ENCODE measurements at regions of chr1 and their contacts with region 1.

Region 1: GRCh38 chr1:153727463-153728304 is at the start of gene INTS3:
- DNase-seq: peak; percentile 100
- ATAC-seq: peak; percentile 99
- total RNA-seq, gene INTS3: 33.0 TPM

Region 2: DNA sequence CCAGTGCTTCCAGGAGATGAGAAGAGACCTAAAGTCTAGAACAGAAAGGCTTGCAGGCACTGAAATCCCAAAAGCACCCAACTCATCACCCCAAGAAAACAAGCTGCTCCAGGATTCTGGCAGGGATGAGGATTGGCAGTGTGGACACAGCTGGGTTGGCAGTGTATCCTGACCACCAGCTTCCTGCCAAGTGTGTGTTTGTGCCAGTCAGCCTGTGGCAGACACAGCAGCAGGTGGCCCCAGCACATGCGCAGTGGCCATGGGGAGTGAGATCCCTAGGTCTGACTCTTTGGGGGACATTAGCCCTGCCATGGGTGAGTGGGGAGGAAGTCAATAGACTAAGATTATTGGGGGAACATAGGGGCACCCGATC is 77.8 kb before region 1 on chr1:
- intact Hi-C with region 1: no loop called
- DNase-seq: no peak
- ATAC-seq: peak; percentile 71

Region 3: DNA sequence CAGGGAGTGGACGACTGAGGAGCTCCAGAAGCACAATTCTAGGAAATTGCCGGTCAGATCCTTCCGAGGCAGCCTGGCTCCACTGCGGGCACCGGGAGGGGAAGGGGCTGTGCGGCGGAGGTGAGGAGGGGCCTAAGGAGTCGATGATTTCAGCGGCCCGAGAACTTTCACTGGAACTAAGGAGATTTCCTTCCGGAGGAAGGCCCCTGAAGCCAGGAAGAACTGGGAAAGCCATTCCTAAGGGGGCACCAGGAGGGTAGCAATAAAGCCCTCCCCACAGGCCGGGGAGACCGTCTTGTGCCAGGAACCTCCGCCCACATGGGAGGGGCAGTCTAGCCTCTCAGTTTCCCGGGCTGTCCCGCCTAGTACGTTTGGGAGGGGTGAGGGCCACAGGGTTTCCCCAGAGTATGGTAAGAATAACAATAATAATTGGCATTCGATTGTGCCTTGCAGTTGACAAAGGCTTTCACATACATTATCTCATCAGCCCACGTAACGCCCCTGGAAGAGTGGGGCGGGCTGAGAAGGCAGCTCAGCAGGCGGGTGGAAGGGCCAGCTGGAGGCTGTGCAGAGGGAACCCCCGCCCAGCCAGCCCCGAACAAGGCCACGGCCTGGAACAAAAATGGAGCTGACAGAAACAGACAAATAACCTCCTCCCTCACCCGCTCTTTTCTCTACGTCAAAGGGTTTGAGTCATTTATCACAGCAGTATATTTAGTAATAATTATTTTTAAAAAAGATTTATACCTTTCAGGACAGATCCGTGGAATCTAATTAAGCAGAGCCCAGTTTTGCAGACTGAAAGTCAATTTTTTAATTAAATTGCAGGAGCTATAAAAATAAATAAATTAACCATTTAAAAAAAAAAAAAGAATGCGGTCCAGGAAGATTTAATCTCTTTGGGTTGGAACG is 29.4 kb before region 1 on chr1:
- intact Hi-C with region 1: loop called (anchors 1 kb)
- DNase-seq: peak; percentile 85
- ATAC-seq: peak; percentile 92

Region 4: GRCh38 chr1:153763365-153764225 is 35.9 kb after region 1 on chr1:
- intact Hi-C with region 1: no loop called
- DNase-seq: no peak
- ATAC-seq: peak; percentile 72